Mammary epithelial cell (primary cell): ENCODE measurements at regions of chr2 and their contacts with region 1.

Region 1: DNA sequence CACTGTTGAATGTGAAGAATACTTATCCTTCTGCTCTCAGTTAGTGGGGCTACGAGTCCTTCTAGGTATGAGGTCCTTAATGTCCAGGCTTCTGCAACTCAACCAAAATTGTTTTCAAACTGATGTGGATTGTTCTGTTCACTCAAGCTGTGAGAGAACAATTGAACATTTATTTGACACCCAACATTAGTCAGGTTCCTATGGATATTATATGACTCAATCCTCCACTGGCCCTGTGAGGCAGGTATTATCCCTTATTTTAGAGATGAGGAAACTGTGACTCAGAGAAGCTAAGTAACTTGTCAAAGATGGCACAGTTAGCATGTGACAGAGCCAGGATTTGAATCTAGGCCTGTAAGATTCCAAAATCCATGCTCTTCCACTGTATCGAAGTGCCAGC is 1.2 kb upstream of the LYG2 start:
- DNase-seq: peak; percentile 89
- H3K4me3 ChIP-seq: no peak overlapping the region
- H3K27ac ChIP-seq: peak overlapping the region; percentile 73
- H3K4me1 ChIP-seq: peaks cover 17% of the 10 kb centered on the region
- H3K27me3 ChIP-seq: no peaks in the 10 kb centered on the region
- CTCF ChIP-seq: no peak

Region 2: GRCh38 chr2:98691303-98691702 is 565.4 kb before region 1 on chr2:
- CTCF ChIA-PET with region 1: no interaction called
- dilution Hi-C with region 1: no loop called
- in situ Hi-C with region 1: no loop called
- intact Hi-C with region 1: no loop called
- DNase-seq: peak; percentile 45
- H3K4me3 ChIP-seq: no peak overlapping the region
- H3K27ac ChIP-seq: no peak overlapping the region
- H3K4me1 ChIP-seq: no peaks in the 10 kb centered on the region
- H3K27me3 ChIP-seq: no peaks in the 10 kb centered on the region
- CTCF ChIP-seq: no peak

Region 3: DNA sequence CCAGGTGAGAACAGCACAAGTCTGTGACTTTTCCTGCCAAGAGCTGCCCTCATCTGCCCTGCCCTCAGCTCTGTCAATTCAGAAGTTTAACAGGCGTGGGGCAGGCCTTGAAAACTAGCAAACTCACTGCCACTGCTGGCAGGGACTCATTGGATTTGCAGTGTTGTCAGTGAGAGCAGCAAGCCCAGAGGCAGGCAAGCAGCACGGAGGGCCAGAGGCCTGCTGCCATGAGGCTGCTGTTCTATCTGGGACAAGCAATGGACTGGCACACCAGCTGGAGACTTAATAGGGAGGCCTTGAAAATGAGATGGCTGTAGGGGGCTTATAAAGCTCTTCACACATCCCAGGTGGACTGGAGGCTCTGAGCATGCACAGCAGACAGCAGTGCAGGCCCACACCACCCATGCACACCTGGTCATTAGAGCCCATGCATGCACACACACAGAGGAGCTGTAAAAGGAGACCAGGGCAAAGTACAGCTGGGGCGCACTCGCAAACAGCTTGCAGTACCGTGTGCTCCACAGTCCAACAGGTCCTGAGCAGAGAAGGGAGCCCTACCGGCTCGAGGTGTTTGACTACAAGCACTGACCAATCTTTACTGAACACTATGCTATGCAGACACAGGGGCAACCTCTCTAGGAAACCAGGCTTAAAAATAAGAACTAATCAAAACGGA is 554.4 kb before region 1 on chr2:
- CTCF ChIA-PET with region 1: no interaction called
- dilution Hi-C with region 1: loop called (anchors 10 kb)
- in situ Hi-C with region 1: no loop called
- intact Hi-C with region 1: no loop called
- DNase-seq: no peak
- H3K4me3 ChIP-seq: no peak overlapping the region
- H3K27ac ChIP-seq: no peak overlapping the region
- H3K4me1 ChIP-seq: peaks cover 2% of the 10 kb centered on the region
- H3K27me3 ChIP-seq: no peaks in the 10 kb centered on the region
- CTCF ChIP-seq: no peak

Region 4: GRCh38 chr2:98787700-98788099 is 469.0 kb before region 1 on chr2:
- CTCF ChIA-PET with region 1: no interaction called
- dilution Hi-C with region 1: no loop called
- in situ Hi-C with region 1: no loop called
- intact Hi-C with region 1: no loop called
- DNase-seq: no peak
- H3K4me3 ChIP-seq: no peak overlapping the region
- H3K27ac ChIP-seq: no peak overlapping the region
- H3K4me1 ChIP-seq: peaks cover 5% of the 10 kb centered on the region
- H3K27me3 ChIP-seq: no peaks in the 10 kb centered on the region
- CTCF ChIP-seq: no peak

Region 5: GRCh38 chr2:99275882-99276281 is 19.2 kb after region 1 on chr2:
- CTCF ChIA-PET with region 1: interaction called, 14 read pairs
- dilution Hi-C with region 1: no loop called
- in situ Hi-C with region 1: no loop called
- intact Hi-C with region 1: no loop called
- DNase-seq: no peak
- H3K4me3 ChIP-seq: no peak overlapping the region
- H3K27ac ChIP-seq: no peak overlapping the region
- H3K4me1 ChIP-seq: peaks cover 7% of the 10 kb centered on the region
- H3K27me3 ChIP-seq: no peaks in the 10 kb centered on the region
- CTCF ChIP-seq: no peak